A549 (cell line): ENCODE measurements at regions of chr9 and their contacts with region 1.

Region 1: GRCh38 chr9:111631071-111631971 is at the start of gene DNAJC25:
- DNase-seq: peak; percentile 99
- ATAC-seq: peak; percentile 97 to 98
- H3K4me3 ChIP-seq: peak within 1 kb of the TSS; percentile 85
- H3K27ac ChIP-seq: peak within 1 kb of the TSS; percentile 89 to 96
- H3K4me1 ChIP-seq: peaks cover 43% of the 10 kb centered on the region; the same call in 2 of the 3 replicates
- CTCF ChIP-seq: no peak
- EP300 ChIP-seq: no peak
- POLR2A ChIP-seq: peak; percentile 99
- RAD21 ChIP-seq: 0 out of 5 replicates have a peak, but pooled peaks of 1 of the 2 experiments have one; percentile 34
- polyA plus RNA-seq, gene DNAJC25: 8.4 and 12.1 TPM in 2 replicates

Region 2: GRCh38 chr9:111330124-111330523 is 301.2 kb before region 1 on chr9 and contains the start of gene OR2K2:
- CTCF ChIA-PET with region 1: no interaction called
- POLR2A ChIA-PET with region 1: no interaction called
- DNase-seq: no peak
- ATAC-seq: no peak
- H3K4me3 ChIP-seq: no peak within 1 kb of the TSS
- H3K27ac ChIP-seq: no peak within 1 kb of the TSS
- H3K4me1 ChIP-seq: peaks cover 4% of the 10 kb centered on the region; the same call in 1 of the 3 replicates
- CTCF ChIP-seq: no peak
- EP300 ChIP-seq: no peak
- POLR2A ChIP-seq: no peak
- RAD21 ChIP-seq: no peak
- polyA plus RNA-seq, gene OR2K2: not detected in 2 replicates

Region 3: GRCh38 chr9:111427186-111427585 is 204.1 kb before region 1 on chr9:
- CTCF ChIA-PET with region 1: no interaction called
- POLR2A ChIA-PET with region 1: no interaction called
- DNase-seq: peak; percentile 5 to 47
- ATAC-seq: peak in 1 of 2 experiments; percentile 39; a peak in 2 of 6 replicates
- H3K4me3 ChIP-seq: no peak overlapping the region
- H3K27ac ChIP-seq: peak overlapping the region; percentile 53 to 67; a peak in 5 of 6 replicates
- H3K4me1 ChIP-seq: peaks cover 29% of the 10 kb centered on the region
- CTCF ChIP-seq: no peak
- EP300 ChIP-seq: no peak
- POLR2A ChIP-seq: no peak
- RAD21 ChIP-seq: no peak

Region 4: DNA sequence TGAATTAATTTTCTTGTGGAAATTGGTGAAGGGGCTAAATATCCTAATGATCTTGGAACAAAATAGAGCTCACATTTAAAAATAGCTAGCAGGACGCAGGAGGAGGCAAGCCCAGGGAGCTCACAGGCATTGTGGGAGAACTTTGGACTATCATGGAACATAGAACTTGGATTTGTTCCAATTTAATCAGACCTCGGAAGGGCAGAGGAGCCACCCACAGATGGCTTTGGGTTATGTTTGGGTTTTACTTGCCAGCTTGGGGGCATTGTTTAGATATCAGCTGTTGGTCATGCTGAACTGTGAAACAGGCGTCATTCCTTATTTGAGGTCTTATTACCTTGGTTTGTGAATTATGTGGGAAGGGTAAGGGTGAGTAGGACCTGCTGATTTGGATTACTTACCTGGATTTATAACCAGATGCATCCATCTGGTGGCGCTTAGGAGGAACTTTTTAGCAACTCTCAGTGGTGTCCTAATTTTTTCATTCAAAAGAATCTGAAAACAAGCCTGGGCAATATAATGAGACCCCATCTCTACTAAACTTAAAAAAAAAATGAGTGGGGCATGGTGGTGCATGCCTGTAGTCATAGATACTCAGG is 17.8 kb before region 1 on chr9:
- CTCF ChIA-PET with region 1: interaction called, 13 read pairs
- POLR2A ChIA-PET with region 1: interaction called, 11 read pairs
- DNase-seq: peak in 1 of 2 experiments; percentile 52
- ATAC-seq: peak; percentile 52 to 82; a peak in 4 of 6 replicates
- H3K4me3 ChIP-seq: no peak overlapping the region
- H3K27ac ChIP-seq: peak overlapping the region; percentile 39 to 63
- H3K4me1 ChIP-seq: peaks cover 13% of the 10 kb centered on the region
- CTCF ChIP-seq: no peak; the same call in 2 of the 3 replicates
- EP300 ChIP-seq: no peak
- POLR2A ChIP-seq: no peak
- RAD21 ChIP-seq: peak in 1 of 2 experiments; percentile 33; a peak in 3 of 5 replicates

Region 5: GRCh38 chr9:111661150-111661801 is 30.0 kb after region 1 on chr9 and contains the start of gene GNG10:
- CTCF ChIA-PET with region 1: no interaction called
- POLR2A ChIA-PET with region 1: interaction called, 10 read pairs
- DNase-seq: peak; percentile 54 to 78
- ATAC-seq: peak; percentile 97
- H3K4me3 ChIP-seq: peak within 1 kb of the TSS; percentile 99
- H3K27ac ChIP-seq: peak within 1 kb of the TSS; percentile 97 to 98
- H3K4me1 ChIP-seq: peaks cover 8% of the 10 kb centered on the region; the same call in 2 of the 3 replicates
- CTCF ChIP-seq: no peak
- EP300 ChIP-seq: no peak
- POLR2A ChIP-seq: peak; percentile 61
- RAD21 ChIP-seq: no peak
- polyA plus RNA-seq, gene GNG10: 80.1 and 102 TPM in 2 replicates